Right ventricle myocardium inferior (tissue), 1 donor: ENCODE measurements at regions of chr5 and their contacts with region 1.

Region 1: GRCh38 chr5:10987930-10988504 is 227.0 kb upstream of the DAP start:
- DNase-seq: peak; percentile 86
- ATAC-seq: peak; percentile 82

Region 2: DNA sequence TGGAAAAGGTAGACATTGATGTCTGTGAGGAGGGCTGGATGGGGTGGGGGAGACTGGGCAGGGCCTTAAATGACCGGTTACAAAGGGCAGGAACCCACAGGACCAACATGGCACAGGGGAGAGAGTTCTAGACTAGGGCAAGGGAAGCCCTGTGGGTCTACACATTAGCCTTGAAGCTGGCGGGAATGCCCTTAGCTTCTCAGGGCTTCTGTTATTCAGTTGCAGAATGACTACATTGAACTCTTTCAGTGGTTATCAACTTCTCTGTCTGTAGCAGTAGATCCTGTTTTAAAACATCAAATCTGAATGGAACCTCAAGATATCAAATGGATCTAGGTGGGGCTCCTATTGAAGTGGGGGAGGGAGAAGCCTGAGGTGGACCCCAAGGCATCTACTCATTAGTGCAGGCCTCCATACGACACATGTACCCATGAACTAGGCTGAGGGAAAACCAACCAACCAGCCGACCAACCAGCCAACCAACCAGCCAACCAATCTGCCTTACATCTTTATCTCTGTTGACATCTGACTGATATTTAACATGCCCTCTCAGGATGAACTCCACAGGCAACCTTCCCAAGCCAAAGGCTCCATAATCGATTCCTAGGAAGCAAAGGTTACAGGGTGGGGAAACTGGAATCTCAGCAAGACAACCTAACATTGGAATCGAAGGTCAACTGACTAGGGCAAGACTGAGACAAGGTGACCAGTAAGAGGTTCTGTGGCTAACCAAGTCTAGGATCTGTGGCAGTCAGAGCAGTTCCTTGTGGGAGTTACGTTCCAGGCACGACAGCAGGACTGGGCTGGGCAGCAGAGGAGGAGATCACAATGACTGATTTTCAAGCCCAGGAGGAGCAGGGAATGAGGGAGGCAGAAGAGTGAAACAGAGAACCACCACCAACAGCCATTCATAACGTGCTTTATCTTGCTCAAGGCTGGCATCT is 275.2 kb before region 1 on chr5:
- intact Hi-C with region 1: no loop called
- DNase-seq: no peak
- ATAC-seq: no peak

Region 3: DNA sequence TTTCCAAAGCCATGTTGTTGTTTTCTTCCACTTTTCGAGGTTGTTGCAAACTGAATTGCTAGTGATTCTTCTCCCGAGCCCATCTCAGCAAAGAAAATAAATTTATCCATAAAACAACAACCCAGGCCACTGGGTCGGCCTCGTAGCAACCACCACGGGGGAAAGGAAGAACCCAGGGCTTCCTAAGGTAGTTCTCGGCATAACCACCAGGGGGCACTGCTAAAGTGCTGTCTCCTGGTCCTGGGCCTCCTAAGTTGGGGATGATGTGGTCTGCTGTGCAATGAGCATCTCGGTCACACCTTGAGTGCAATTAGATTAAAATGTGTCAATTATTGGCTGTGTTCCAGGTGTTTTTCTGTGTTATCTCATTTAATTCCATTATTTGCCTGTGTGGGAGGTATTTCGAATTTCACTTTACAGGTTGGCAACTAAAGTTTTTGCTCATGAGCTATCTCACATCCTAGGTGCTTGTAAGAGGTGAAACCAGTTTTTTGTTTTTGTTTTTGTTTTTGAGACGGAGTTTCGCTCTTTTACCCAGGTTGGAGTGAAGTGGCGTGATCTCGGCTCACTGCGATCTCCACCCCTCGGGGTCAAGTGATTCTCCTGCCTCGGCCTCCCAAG is 124.1 kb before region 1 on chr5:
- intact Hi-C with region 1: loop called (anchors 10 kb)
- DNase-seq: no peak
- ATAC-seq: peak; percentile 67

Region 4: DNA sequence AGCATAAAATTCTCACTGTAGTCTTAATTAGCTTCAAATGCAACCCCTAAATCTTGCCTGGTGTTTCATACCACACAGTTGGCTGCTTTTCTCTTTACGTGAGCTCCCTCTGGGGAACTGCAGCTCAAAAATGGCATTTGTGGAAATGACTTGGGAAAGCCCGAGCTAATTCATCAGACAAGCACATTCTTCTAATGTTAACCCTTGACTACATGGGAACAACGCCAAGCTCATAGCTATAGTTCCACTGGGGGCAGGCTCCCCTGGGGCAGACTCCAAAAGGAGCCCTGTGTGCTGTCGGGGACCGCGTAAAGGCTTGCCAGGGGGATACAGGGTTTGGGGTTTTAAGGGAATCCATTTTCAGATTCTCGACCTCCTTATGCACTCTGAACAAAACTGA is 74.4 kb after region 1 on chr5:
- intact Hi-C with region 1: loop called (anchors 1 kb)
- DNase-seq: no peak
- ATAC-seq: no peak

Region 5: DNA sequence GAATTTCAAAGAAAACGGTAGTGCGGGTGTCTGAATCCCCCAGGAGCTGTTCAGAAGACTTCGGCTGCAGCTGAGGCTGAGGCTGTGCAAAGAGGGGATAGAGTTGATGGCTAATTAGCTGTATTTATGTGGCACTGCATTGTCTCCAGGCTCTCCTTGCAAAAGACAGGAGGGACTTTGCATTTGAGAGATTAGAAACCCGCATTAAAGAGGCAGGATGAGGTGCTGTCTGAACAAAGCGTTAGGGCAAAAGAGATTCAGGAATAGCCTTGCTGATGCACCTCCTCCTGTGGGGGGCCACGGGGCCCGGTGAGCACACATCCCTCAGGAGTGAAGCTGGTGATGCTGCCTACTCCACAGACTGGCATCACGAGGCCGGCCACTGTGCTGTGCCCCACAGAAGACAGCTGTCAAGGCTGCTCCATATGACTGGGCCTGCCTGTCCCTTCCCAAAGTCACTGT is 116.7 kb after region 1 on chr5:
- intact Hi-C with region 1: loop called (anchors 5 kb)
- DNase-seq: no peak
- ATAC-seq: no peak